Activated CD8-positive, alpha-beta T cell treated with anti-CD3 and anti-CD28 coated beads, Interleukin-2, amount 10 ng/mL, durations not matched to agents 7 days and 5 days (primary cell): ENCODE measurements at regions of chr10 and their contacts with region 1.

Region 1: GRCh38 chr10:17353559-17354300 is 100.7 kb downstream of the ST8SIA6 start:
- DNase-seq: no peak
- ATAC-seq: no peak
- H3K4me3 Mint-ChIP-seq: no peak overlapping the region
- H3K27ac Mint-ChIP-seq: no peak overlapping the region
- H3K4me1 Mint-ChIP-seq: no peaks in the 10 kb centered on the region
- H3K27me3 Mint-ChIP-seq: peaks cover 9% of the 10 kb centered on the region

Region 2: GRCh38 chr10:17375936-17376584 is 22.3 kb after region 1 on chr10:
- CTCF ChIA-PET with region 1: interaction called, 11 read pairs
- POLR2A ChIA-PET with region 1: no interaction called
- DNase-seq: peak; percentile 37
- ATAC-seq: no peak
- H3K4me3 Mint-ChIP-seq: no peak overlapping the region
- H3K27ac Mint-ChIP-seq: no peak overlapping the region
- H3K4me1 Mint-ChIP-seq: no peaks in the 10 kb centered on the region
- H3K27me3 Mint-ChIP-seq: peaks cover 2% of the 10 kb centered on the region

Region 3: DNA sequence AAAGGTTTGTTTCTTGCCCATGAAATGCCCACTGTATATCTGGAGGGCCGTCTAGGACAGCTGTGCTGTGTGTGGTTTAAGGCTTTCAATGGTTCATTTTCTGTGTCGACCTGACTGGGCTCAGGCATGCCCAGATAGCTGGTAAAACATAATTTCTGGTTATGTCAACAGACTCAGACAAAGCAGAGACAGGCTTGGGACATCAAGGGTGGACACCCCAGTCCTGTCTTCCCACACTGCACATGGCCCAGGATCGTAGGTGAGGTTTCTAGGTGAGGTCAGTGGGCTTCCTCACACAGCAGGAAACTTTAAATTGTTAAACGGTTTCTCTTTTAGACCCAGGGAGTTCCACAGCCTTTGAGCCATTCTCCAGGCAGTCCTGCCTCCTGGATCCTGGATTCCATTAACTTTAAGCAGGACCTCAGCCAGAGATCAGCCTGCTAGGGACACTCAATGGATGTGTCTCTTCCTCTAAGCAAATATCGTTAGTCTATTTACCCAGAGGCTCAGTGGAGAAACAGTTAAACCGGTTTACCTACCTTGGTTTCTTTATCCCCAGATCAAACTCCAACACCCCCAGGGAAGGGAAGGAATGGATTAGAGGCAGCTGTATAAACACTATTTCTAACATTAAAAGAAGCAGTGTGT is 34.3 kb after region 1 on chr10:
- CTCF ChIA-PET with region 1: no interaction called
- POLR2A ChIA-PET with region 1: no interaction called
- DNase-seq: no peak
- ATAC-seq: no peak
- H3K4me3 Mint-ChIP-seq: no peak overlapping the region
- H3K27ac Mint-ChIP-seq: no peak overlapping the region
- H3K4me1 Mint-ChIP-seq: no peaks in the 10 kb centered on the region
- H3K27me3 Mint-ChIP-seq: no peaks in the 10 kb centered on the region